Calu3 (cell line): ENCODE measurements at regions of chr12 and their contacts with region 1.

Region 1: DNA sequence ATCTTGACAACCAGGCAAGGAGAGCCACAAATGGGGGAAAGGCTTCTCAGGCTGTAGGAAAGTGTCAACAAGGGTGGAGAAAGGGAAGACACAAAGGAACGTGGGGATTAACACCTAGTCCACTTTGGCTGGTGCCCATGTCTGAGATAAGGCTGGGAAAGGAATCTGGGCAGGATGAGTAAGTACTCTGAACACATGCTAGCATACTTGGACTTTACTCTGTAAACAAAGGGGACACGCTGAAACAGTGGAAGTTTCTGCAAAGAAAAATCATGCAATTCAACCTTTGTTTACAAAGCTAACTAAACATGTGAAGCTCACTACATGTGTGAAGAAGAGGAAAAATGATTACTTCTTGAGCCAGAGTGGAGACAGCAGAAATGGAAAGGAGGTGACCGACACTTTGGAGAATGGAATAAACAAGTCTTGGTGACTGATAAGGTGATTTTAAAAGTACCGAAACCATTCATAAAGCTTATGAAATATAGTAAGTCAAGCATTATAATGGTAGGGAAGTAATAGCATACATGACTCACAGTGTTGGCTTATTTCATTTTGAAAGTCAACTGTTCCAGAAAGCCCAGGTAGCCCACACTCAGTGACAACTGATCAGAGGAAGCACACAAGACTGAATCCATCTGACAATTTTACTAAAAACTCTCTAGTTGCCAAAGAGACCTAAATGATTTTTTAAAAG is 13.2 kb downstream of the CPNE8 start:
- DNase-seq: peak; percentile 32
- H3K4me3 Mint-ChIP-seq: peak overlapping the region; percentile 54
- H3K27ac Mint-ChIP-seq: peak overlapping the region; percentile 78
- H3K4me1 Mint-ChIP-seq: peaks cover 24% of the 10 kb centered on the region
- H3K27me3 Mint-ChIP-seq: no peaks in the 10 kb centered on the region
- CTCF ChIP-seq: no peak

Region 2: DNA sequence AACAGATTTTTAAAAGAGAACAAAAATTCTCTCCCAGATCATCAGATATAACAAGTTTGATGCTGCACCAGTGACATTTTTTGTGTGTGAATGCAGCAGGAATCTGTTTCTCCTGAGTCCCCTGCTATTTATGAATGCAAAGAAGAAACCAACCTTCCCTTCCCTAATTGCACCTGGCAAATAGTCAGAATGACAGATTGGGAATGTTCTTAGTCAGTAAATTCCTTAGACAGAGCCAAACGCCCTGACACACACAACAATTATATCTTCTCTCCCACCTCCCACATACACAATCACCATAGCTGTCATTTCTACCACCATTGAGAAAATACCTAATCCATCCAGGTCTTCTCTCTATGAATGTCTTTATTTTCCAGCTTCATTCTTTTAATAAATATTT is 401.3 kb before region 1 on chr12:
- CTCF ChIA-PET with region 1: no interaction called
- intact Hi-C with region 1: no loop called
- DNase-seq: no peak
- H3K4me3 Mint-ChIP-seq: no peak overlapping the region
- H3K27ac Mint-ChIP-seq: no peak overlapping the region
- H3K4me1 Mint-ChIP-seq: no peaks in the 10 kb centered on the region
- H3K27me3 Mint-ChIP-seq: no peaks in the 10 kb centered on the region
- CTCF ChIP-seq: no peak

Region 3: DNA sequence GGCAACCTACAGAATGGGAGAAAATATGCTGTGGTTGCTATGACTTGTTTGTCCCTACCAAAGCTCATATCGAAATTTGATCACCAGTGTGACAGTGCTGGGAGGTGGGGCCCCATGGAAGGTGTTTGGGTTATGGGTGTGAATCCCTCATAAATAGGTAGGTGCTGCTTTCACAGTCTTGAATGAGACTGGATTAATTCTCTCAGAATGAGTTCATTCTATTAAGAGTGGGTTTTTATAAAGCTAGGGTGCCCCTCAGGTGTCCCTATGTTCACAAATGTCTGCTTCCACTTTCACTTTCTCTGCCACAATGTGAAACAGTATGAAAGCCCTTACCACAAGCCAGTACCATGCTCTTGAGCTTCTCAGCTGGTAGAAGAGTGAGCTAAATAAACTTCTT is 120.4 kb before region 1 on chr12:
- CTCF ChIA-PET with region 1: no interaction called
- intact Hi-C with region 1: loop called (anchors 10 kb)
- DNase-seq: no peak
- H3K4me3 Mint-ChIP-seq: no peak overlapping the region
- H3K27ac Mint-ChIP-seq: no peak overlapping the region
- H3K4me1 Mint-ChIP-seq: no peaks in the 10 kb centered on the region
- H3K27me3 Mint-ChIP-seq: no peaks in the 10 kb centered on the region
- CTCF ChIP-seq: no peak

Region 4: GRCh38 chr12:38850476-38850875 is 41.8 kb before region 1 on chr12:
- CTCF ChIA-PET with region 1: no interaction called
- intact Hi-C with region 1: no loop called
- DNase-seq: no peak
- H3K4me3 Mint-ChIP-seq: no peak overlapping the region
- H3K27ac Mint-ChIP-seq: no peak overlapping the region
- H3K4me1 Mint-ChIP-seq: no peaks in the 10 kb centered on the region
- H3K27me3 Mint-ChIP-seq: no peaks in the 10 kb centered on the region
- CTCF ChIP-seq: no peak

Region 5: DNA sequence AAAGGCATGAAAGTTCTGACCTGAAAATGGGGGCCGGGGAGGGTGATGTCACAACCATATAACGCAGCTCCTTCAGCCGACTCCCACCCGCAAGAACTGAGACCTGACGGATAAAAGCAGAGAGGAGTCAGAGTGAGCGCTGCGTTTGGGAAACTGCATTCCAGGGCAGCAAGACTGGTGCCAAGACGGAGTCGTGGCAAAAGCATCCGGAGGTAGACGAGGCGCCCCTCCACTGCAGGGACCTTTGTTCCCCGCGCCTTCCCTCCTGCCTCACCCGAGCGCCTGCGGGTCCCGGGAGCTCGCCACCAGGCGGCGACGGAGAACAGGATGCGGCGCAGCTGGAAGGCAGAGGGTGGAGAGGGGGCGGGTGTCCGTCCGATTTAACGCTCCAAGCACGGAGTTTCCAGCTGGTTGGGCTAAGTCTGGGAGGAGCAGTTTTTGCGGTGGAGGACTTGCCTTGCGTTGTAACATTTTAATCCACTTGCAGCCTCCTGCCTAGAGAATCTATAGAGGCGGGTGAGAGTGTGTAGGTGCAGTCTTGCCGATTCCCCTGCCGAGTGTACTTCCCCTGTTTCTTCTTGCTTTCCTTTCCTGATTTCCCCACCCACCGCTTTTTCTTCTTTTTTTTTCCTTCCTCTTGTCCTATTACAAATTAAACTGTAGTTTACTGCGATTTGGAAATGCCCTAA is 14.4 kb after region 1 on chr12:
- CTCF ChIA-PET with region 1: interaction called, 10 read pairs
- intact Hi-C with region 1: loop called (anchors 1 kb)
- DNase-seq: peak; percentile 88
- H3K4me3 Mint-ChIP-seq: peak overlapping the region; percentile 90
- H3K27ac Mint-ChIP-seq: peak overlapping the region; percentile 72
- H3K4me1 Mint-ChIP-seq: peaks cover 8% of the 10 kb centered on the region
- H3K27me3 Mint-ChIP-seq: no peaks in the 10 kb centered on the region
- CTCF ChIP-seq: peak; percentile 65